Endothelial cell of umbilical vein (primary cell): ENCODE measurements at regions of chr22 and their contacts with region 1.

Region 1: DNA sequence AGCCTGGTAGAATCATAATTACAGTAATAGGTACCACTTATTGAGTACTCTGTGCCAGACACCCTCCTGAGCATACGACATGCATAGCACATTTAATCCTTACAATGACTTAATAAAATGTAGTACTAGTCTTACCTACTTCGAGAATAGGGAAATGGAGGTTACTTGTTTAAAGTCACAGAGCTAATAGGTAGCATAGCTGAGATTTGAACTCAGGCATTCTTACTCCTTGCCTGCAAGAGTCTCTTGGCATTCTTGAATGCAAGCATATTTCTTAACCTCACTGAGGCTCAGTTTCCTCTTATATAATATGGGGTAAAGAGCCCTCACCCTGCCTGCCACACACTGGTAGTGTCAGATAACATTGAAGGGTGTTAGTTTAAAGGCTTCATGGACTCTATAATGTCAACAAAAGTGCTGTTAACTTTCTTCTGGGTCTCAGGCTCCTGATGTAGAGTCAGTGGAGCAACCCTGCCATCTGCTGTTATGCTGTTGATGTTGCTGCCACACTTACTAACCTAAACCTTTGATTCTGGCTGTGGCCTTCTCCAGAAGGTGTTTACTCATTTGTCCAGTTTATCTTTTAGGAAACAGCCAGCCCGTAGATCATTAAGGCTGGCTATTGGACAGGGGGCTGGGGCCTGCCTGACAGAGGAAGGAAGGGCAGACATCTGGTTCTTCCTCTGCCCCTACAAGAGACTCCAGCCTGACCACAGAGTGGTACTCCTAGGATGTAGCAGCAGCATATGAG is 18.9 kb downstream of the LIMK2 start:
- DNase-seq: peak; percentile 92
- H3K4me3 ChIP-seq: no peak overlapping the region
- H3K27ac ChIP-seq: peak overlapping the region; percentile 83
- H3K4me1 ChIP-seq: peaks cover 69% of the 10 kb centered on the region
- H3K27me3 ChIP-seq: no peaks in the 10 kb centered on the region
- CTCF ChIP-seq: peak; percentile 79 to 85
- POLR2A ChIP-seq: peak; percentile 42

Region 2: DNA sequence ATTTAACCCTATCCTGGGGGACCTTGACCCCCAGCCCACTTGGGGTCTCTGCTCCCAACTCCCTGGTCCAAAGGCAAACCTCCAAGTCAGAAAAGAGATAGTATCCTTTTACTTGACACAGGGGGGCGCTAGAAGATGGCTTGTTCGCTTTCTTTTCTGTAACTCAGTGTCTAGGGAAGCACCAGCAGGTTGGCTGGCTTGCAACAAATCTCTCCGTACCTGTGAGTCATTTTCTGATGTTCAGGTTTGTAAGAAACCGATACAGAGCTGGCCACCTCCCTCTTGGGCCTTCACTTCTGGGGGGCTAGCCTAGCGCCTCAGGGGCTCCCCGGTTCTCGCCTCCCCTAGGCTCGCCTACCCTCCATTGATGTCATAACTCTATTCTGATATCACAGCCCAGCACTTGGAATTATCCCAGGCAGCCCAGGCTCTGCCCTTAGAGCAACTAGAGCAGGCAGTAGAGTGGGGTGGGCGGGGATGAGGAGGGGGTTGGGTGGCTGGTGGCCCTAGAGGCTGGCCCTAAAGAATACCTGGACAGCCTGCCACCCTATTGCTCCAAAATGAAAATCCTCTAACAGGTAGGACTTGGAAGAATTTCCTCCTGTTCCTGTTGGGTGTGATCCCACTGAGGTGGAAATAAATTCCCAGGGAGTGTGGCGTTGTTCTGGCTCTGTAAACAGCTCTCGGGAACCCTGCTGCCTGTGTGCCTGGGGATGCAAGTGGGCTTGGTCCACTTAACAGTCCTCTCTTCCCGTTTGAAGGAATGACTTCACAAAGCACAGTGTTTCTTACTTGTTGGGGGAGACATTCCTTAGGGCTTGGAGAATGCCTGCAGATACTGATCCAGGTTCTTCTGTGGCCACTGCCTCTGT is 467.0 kb before region 1 on chr22:
- CTCF ChIA-PET with region 1: interaction called, 3 read pairs
- POLR2A ChIA-PET with region 1: no interaction called
- dilution Hi-C with region 1: no loop called
- intact Hi-C with region 1: loop called (anchors 1 kb)
- DNase-seq: peak; percentile 77
- H3K4me3 ChIP-seq: no peak overlapping the region
- H3K27ac ChIP-seq: no peak overlapping the region
- H3K4me1 ChIP-seq: no peaks in the 10 kb centered on the region
- H3K27me3 ChIP-seq: no peaks in the 10 kb centered on the region
- CTCF ChIP-seq: peak; percentile 67 to 71
- POLR2A ChIP-seq: no peak

Region 3: GRCh38 chr22:30979932-30980331 is 251.1 kb before region 1 on chr22:
- CTCF ChIA-PET with region 1: no interaction called
- POLR2A ChIA-PET with region 1: no interaction called
- dilution Hi-C with region 1: no loop called
- intact Hi-C with region 1: no loop called
- DNase-seq: no peak
- H3K4me3 ChIP-seq: no peak overlapping the region
- H3K27ac ChIP-seq: no peak overlapping the region
- H3K4me1 ChIP-seq: no peaks in the 10 kb centered on the region
- H3K27me3 ChIP-seq: no peaks in the 10 kb centered on the region
- CTCF ChIP-seq: no peak
- POLR2A ChIP-seq: no peak

Region 4: GRCh38 chr22:31036671-31037550 is 194.1 kb before region 1 on chr22:
- CTCF ChIA-PET with region 1: no interaction called
- POLR2A ChIA-PET with region 1: no interaction called
- dilution Hi-C with region 1: no loop called
- intact Hi-C with region 1: no loop called
- DNase-seq: no peak
- H3K4me3 ChIP-seq: no peak overlapping the region
- H3K27ac ChIP-seq: no peak overlapping the region
- H3K4me1 ChIP-seq: no peaks in the 10 kb centered on the region
- H3K27me3 ChIP-seq: peaks cover 0 to 5% of the 10 kb centered on the region in 2 experiments
- CTCF ChIP-seq: no peak
- POLR2A ChIP-seq: no peak

Region 5: DNA sequence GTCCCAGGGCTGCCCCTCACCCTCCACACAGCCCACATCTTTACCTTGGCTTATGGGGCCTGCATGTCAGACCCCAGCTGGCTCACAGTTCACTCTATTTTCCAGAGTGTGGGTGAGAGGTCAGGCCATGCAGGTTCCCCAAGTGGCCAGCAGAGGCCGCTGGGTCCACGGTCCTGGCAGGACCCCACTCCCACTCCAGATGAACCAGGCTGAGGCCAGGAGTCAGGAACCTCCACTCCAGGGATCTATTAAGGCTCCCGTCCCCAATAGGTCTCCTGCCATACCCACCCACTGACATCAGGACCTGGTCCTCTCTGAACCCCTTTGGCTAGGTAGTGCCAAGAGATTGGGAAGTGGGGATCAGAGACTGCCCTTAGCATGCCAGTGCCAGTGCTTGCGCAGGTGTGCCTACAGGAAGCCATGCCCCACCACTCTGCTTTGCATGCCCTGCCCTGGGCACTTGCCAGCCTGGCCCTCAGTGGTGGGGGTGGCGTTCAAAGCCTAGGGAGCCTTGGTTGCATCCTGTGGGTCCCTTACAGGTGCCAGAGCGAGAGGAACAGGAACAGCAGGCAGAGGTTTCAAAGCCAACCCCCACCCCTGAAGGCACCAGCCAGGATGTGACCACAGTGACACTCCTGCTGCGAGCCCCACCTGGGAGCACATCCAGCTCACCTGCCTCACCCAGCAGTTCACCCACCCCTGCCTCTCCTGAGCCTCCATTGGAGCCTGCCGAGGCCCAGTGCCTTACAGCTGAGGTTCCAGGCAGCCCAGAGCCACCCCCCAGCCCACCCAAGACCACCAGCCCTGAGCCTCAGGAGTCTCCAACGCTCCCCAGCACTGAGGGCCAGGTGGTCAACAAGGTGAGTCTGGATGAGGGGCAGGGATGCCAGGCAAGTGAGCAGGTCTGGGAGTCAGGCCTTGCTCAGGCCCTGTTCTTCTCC is 141.6 kb before region 1 on chr22:
- CTCF ChIA-PET with region 1: interaction called, 19 read pairs
- POLR2A ChIA-PET with region 1: no interaction called
- dilution Hi-C with region 1: no loop called
- intact Hi-C with region 1: loop called (anchors 1 kb)
- DNase-seq: peak; percentile 34
- H3K4me3 ChIP-seq: no peak overlapping the region
- H3K27ac ChIP-seq: no peak overlapping the region
- H3K4me1 ChIP-seq: peaks cover 5% of the 10 kb centered on the region
- H3K27me3 ChIP-seq: no peaks in the 10 kb centered on the region
- CTCF ChIP-seq: peak; percentile 76 to 85
- POLR2A ChIP-seq: no peak

Region 6: GRCh38 chr22:31160328-31160978 is 70.6 kb before region 1 on chr22:
- CTCF ChIA-PET with region 1: interaction called, 43 read pairs
- POLR2A ChIA-PET with region 1: interaction called, 3 read pairs
- dilution Hi-C with region 1: no loop called
- intact Hi-C with region 1: loop called (anchors 5 kb)
- DNase-seq: peak; percentile 55
- H3K4me3 ChIP-seq: peak overlapping the region; percentile 17 to 79 (median 52)
- H3K27ac ChIP-seq: peak overlapping the region; percentile 34
- H3K4me1 ChIP-seq: peaks cover 26% of the 10 kb centered on the region
- H3K27me3 ChIP-seq: no peaks in the 10 kb centered on the region
- CTCF ChIP-seq: no peak
- POLR2A ChIP-seq: no peak

Region 7: DNA sequence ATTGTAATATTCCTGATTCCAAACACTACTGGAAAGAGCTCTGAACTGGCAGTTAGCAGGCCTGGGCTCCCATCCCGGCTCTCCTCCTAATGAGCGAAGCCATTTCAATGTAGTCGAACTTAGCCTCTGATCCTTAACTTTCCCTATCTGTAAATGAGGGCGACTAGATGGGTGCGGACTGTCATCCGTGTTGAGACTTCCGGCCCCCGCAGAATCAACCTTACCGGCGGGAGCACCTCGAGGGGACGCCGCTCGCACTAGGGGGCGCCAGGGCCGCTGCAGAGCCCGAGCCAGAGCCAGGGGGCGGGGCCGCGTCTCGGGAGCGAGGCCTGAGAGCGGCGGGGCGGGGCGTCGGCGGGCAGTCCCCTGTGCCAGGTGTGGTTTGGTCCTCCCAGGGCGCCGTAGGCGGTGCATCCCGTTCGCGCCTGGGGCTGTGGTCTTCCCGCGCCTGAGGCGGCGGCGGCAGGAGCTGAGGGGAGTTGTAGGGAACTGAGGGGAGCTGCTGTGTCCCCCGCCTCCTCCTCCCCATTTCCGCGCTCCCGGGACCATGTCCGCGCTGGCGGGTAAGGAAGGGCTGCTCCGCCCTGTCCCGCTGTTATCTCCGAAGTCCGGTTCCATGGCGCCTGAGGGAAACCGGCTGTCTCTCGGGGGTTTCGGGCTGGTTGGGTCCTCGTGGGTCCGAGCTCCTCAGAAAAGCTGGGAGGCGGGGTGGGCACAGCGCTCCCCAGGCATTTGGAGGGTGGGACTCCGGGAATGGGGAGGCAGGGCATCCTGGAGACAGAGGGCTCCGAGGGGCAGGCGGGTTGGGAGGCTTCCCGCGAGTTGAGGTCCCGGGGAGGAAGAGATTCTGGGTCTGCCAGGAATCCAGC is 18.9 kb before region 1 on chr22 and contains the start of gene LIMK2:
- CTCF ChIA-PET with region 1: interaction called, 181 read pairs
- POLR2A ChIA-PET with region 1: interaction called, 5 read pairs
- dilution Hi-C with region 1: no loop called
- intact Hi-C with region 1: loop called (anchors 1 kb)
- DNase-seq: peak; percentile 88
- H3K4me3 ChIP-seq: peak within 1 kb of the TSS; percentile 86 to 97 (median 92)
- H3K27ac ChIP-seq: peak within 1 kb of the TSS; percentile 93
- H3K4me1 ChIP-seq: peaks cover 60% of the 10 kb centered on the region
- H3K27me3 ChIP-seq: no peaks in the 10 kb centered on the region
- CTCF ChIP-seq: peak; percentile 76 to 85
- POLR2A ChIP-seq: peak; percentile 88
- total RNA-seq, gene LIMK2: 71.7 and 76.7 TPM in 2 replicates

Region 8: GRCh38 chr22:31248138-31248745 is 17.2 kb after region 1 on chr22:
- CTCF ChIA-PET with region 1: interaction called, 11 read pairs
- POLR2A ChIA-PET with region 1: interaction called, 3 read pairs
- dilution Hi-C with region 1: no loop called
- intact Hi-C with region 1: loop called (anchors 1 kb)
- DNase-seq: peak; percentile 60
- H3K4me3 ChIP-seq: no peak overlapping the region
- H3K27ac ChIP-seq: no peak overlapping the region
- H3K4me1 ChIP-seq: peaks cover 23% of the 10 kb centered on the region
- H3K27me3 ChIP-seq: no peaks in the 10 kb centered on the region
- CTCF ChIP-seq: no peak
- POLR2A ChIP-seq: no peak